ENCODE measurements at regions of chr3 and their contacts with region 1.

Region 1: GRCh38 chr3:141913150-141913811 is 36.8 kb downstream of the ATP1B3 start:
- DNase-seq: peak; percentile 74
- H3K4me3 Mint-ChIP-seq: no peak overlapping the region
- H3K27ac Mint-ChIP-seq: no peak overlapping the region
- H3K4me1 Mint-ChIP-seq: peaks cover 13% of the 10 kb centered on the region
- H3K27me3 Mint-ChIP-seq: no peaks in the 10 kb centered on the region
- CTCF ChIP-seq: peak; percentile 53

Region 2: GRCh38 chr3:141894524-141895178 is 18.6 kb before region 1 on chr3:
- CTCF ChIA-PET with region 1: interaction called, 10 read pairs
- POLR2A ChIA-PET with region 1: interaction called, 5 read pairs
- intact Hi-C with region 1: no loop called
- DNase-seq: peak; percentile 84
- H3K4me3 Mint-ChIP-seq: no peak overlapping the region
- H3K27ac Mint-ChIP-seq: peak overlapping the region; percentile 87
- H3K4me1 Mint-ChIP-seq: peaks cover 37% of the 10 kb centered on the region
- H3K27me3 Mint-ChIP-seq: no peaks in the 10 kb centered on the region
- CTCF ChIP-seq: no peak

Region 3: GRCh38 chr3:141900343-141900742 is 12.9 kb before region 1 on chr3:
- CTCF ChIA-PET with region 1: interaction called, 10 read pairs
- POLR2A ChIA-PET with region 1: interaction called, 5 read pairs
- intact Hi-C with region 1: no loop called
- DNase-seq: no peak
- H3K4me3 Mint-ChIP-seq: no peak overlapping the region
- H3K27ac Mint-ChIP-seq: no peak overlapping the region
- H3K4me1 Mint-ChIP-seq: peaks cover 16% of the 10 kb centered on the region
- H3K27me3 Mint-ChIP-seq: no peaks in the 10 kb centered on the region
- CTCF ChIP-seq: no peak